Natural killer cell (primary cell): ENCODE measurements at regions of chr12 and their contacts with region 1.

Region 1: DNA sequence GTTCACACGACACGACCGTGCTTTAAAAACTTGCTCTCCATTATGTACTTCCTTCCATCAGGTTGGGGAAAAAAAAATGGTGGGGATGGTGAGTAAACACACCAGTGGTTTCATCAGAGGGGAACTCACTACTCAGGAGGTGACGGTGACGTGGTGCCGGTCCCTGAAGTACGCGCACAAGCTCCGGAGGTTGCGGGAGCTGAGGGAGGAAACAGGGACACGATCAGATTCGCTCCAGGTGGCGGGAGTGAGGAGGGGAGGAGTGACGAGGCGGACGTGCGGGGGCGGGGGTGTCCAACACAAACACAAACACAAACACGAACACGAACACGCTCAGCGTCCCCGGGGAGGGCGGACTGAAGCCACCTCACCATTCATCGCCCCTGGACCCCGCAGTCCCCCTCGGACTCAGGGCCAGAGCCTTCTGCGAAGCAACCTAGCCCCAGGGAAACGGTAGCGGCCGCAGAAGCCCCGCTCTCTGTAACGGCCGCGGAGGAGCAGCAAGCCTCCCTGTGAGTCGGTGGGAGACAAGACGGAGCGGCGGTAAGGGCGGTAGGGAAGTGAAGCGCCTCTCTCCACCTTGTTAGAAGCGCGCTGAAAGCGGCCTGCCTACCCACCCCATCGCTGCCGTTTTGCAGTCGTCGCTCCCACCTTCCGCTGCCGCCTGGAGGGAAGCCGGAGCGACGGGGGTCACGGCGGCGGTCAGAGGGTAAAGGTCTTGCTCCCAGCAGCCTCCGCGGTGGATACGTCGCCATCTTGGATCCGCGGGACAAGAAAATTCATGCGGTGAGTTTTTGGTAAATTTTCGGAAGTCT is at the start of gene CNOT2:
- DNase-seq: peak; percentile 86 to 95
- ATAC-seq: peak; percentile 68 to 87 (median 74)
- H3K4me3 ChIP-seq: peak within 1 kb of the TSS; percentile 78
- H3K4me3 Mint-ChIP-seq: peak within 1 kb of the TSS; percentile 94
- H3K27ac ChIP-seq: peak within 1 kb of the TSS; percentile 96
- H3K27ac Mint-ChIP-seq: peak within 1 kb of the TSS; percentile 99 to 100
- H3K4me1 ChIP-seq: peaks cover 10% of the 10 kb centered on the region
- H3K4me1 Mint-ChIP-seq: peaks cover 68 to 72% of the 10 kb centered on the region in 2 donors
- H3K27me3 ChIP-seq: no peaks in the 10 kb centered on the region
- H3K27me3 Mint-ChIP-seq: no peaks in the 10 kb centered on the region
- CTCF ChIP-seq: no peak
- total RNA-seq, gene CNOT2: 160 to 178 (median 173) TPM

Region 2: DNA sequence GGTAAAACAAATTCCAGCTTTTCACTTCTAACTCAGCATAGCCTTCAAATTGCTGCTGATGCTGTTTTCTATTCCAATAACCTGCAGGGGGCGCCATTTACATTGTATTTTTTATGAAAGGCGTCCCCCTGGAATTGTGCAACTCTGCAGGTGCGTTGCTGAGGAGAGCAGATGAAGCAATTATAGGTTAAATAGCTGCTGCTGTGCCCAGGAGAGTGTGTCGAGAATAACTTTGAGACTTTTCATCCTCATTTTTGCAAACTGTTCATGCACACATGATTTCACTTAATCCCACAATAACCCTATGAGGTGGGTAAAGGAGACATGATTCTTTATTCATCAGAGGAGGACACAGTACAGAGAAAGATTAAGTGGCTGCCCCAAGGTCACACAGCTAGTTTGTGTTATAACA is 342.2 kb before region 1 on chr12:
- intact Hi-C with region 1: loop called (anchors 5 kb)
- DNase-seq: peak; percentile 49 to 74
- ATAC-seq: peak; percentile 56 to 67 (median 64)
- H3K4me3 ChIP-seq: no peak overlapping the region
- H3K4me3 Mint-ChIP-seq: no peak overlapping the region
- H3K27ac ChIP-seq: no peak overlapping the region
- H3K27ac Mint-ChIP-seq: no peak overlapping the region
- H3K4me1 ChIP-seq: no peaks in the 10 kb centered on the region
- H3K4me1 Mint-ChIP-seq: peaks cover 6 to 7% of the 10 kb centered on the region in 2 donors
- H3K27me3 ChIP-seq: no peaks in the 10 kb centered on the region
- H3K27me3 Mint-ChIP-seq: no peaks in the 10 kb centered on the region
- CTCF ChIP-seq: peak; percentile 87

Region 3: DNA sequence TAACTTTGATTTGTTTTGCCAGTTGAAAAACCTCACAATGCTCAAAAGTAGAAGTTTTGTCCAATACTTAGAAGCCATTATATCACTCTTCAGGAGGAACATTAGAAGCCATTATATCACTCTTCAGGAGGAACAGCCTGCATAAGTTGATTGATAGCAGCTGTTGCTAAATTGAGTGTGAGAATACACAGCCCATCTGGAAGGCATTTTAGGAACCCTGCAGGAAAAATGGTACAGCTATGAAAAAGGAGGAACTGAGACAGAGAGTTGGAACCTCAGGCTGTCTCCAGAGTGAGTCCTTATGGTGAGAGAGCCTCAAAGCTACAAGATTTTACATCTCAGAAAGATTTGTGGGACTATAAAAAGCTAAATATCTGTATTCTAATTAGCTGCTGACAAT is 210.8 kb before region 1 on chr12:
- intact Hi-C with region 1: loop called (anchors 5 kb)
- DNase-seq: no peak
- ATAC-seq: no peak
- H3K4me3 ChIP-seq: no peak overlapping the region
- H3K4me3 Mint-ChIP-seq: peak overlapping the region; percentile 32
- H3K27ac ChIP-seq: no peak overlapping the region
- H3K27ac Mint-ChIP-seq: peak overlapping the region in 1 of 2 donors; percentile 10
- H3K4me1 ChIP-seq: no peaks in the 10 kb centered on the region
- H3K4me1 Mint-ChIP-seq: peaks cover 16 to 20% of the 10 kb centered on the region in 2 donors
- H3K27me3 ChIP-seq: no peaks in the 10 kb centered on the region
- H3K27me3 Mint-ChIP-seq: peaks cover 0 to 4% of the 10 kb centered on the region in 2 donors
- CTCF ChIP-seq: no peak

Region 4: DNA sequence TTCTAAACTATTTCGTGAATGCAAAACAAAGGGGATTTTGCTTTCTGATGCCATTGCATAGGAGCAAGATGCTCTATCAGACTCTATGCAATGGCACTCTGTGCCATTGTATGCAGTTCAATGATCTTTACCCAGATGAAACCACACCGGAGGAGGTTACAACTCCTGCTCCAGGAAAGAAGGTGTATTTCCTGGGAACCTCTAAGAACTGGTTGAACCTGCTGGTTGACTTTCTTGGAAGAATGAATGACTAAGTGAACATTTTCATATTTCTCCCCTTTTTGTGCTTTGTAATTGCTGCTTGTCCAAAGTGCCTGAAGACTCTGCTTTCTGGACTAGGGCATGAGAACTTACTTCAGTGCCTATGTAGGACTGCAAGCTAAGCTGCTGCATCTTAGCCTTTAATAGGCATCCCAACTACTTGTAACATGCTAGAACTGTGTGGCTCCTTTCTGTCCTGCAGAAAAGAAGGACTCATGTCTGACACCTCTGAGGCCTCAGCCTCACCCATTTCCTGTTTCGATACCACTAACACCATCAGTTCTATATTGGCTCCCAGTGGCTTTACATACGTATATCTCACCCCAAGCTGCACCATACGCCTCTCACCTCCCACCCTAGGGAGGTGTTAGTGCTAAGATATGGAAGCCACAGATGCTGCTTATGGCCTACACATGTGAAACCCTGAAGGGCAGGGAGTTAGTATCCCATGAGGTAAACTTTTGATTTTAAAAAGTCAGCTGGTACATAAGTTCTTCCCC is 193.1 kb before region 1 on chr12:
- intact Hi-C with region 1: loop called (anchors 1 kb)
- DNase-seq: peak; percentile 69 to 71
- ATAC-seq: peak; percentile 91 to 98 (median 97)
- H3K4me3 ChIP-seq: no peak overlapping the region
- H3K4me3 Mint-ChIP-seq: peak overlapping the region; percentile 70
- H3K27ac ChIP-seq: peak overlapping the region; percentile 47
- H3K27ac Mint-ChIP-seq: peak overlapping the region; percentile 82 to 87
- H3K4me1 ChIP-seq: peaks cover 14% of the 10 kb centered on the region
- H3K4me1 Mint-ChIP-seq: peaks cover 60 to 61% of the 10 kb centered on the region in 2 donors
- H3K27me3 ChIP-seq: peaks cover 2% of the 10 kb centered on the region
- H3K27me3 Mint-ChIP-seq: peaks cover 24 to 30% of the 10 kb centered on the region in 2 donors
- CTCF ChIP-seq: no peak

Region 5: DNA sequence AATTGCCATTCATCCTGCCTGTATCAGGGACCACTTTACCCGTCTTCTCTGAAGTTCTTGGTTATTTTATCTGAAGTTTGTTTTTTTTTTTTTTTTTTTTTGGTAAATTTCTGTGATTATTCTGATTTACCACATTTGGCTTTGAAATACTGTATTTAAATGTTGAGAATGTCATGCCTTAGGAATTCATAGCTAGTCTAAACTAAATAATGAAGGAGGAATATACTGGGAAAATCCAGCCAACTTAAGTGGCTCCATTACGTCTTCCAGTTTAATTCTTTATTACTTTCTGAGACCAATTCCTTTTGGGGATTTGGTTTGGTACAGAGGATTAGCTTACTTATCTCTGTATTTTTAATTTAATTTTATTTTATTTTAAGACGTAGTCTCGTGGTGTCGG is 62.9 kb after region 1 on chr12:
- intact Hi-C with region 1: loop called (anchors 5 kb)
- DNase-seq: no peak
- ATAC-seq: no peak
- H3K4me3 ChIP-seq: no peak overlapping the region
- H3K4me3 Mint-ChIP-seq: no peak overlapping the region
- H3K27ac ChIP-seq: no peak overlapping the region
- H3K27ac Mint-ChIP-seq: peak overlapping the region; percentile 54 to 71
- H3K4me1 ChIP-seq: peaks cover 11% of the 10 kb centered on the region
- H3K4me1 Mint-ChIP-seq: peaks cover 49 to 53% of the 10 kb centered on the region in 2 donors
- H3K27me3 ChIP-seq: no peaks in the 10 kb centered on the region
- H3K27me3 Mint-ChIP-seq: no peaks in the 10 kb centered on the region
- CTCF ChIP-seq: no peak

Region 6: DNA sequence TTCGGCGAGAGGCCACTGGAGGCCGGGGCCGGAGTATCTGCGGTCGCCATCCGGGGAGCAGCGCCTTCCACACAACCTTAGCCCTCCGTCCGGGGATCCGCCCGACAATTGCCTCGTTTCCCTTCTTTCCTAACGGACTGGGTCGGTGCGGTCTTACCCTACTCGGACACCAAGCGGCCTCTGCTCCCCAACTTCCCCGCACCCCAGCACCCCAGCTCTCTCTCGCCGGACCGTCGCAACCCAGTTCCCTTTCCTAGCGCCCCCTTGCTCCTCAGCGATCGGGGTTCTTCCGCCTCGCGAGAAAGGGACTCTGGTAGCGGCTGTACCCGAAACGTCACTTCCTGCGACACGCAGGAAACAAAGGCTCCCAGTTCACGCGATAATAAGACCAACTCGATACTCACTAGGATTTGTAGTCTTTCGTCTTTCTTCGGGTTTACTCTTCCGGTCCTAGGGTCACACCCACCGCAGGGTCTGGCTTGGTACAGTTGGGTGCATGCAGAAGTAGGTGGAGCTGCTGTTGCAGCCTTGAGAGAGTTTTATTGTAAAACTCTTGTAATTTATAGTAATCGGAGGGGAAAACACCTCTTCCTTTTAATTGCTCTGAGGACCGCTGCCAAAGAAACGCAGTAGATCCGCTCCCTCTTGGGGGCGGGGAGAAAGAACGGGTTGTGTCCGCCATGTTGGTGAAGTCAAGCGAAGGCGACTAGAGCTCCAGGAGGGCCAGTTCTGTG is 1420.8 kb after region 1 on chr12 and contains the start of gene ZFC3H1:
- intact Hi-C with region 1: loop called (anchors 5 kb)
- DNase-seq: peak; percentile 86 to 98
- ATAC-seq: peak; percentile 72 to 89 (median 77)
- H3K4me3 ChIP-seq: peak within 1 kb of the TSS; percentile 92
- H3K4me3 Mint-ChIP-seq: peak within 1 kb of the TSS; percentile 100
- H3K27ac ChIP-seq: peak within 1 kb of the TSS; percentile 98
- H3K27ac Mint-ChIP-seq: peak within 1 kb of the TSS; percentile 100
- H3K4me1 ChIP-seq: peaks cover 10% of the 10 kb centered on the region
- H3K4me1 Mint-ChIP-seq: peaks cover 53 to 56% of the 10 kb centered on the region in 2 donors
- H3K27me3 ChIP-seq: no peaks in the 10 kb centered on the region
- H3K27me3 Mint-ChIP-seq: peaks cover 0 to 2% of the 10 kb centered on the region in 2 donors
- CTCF ChIP-seq: no peak
- total RNA-seq, gene ZFC3H1: 158 to 164 (median 164) TPM